ENCODE measurements at regions of chr6 and their contacts with region 1.

Region 1: GRCh38 chr6:106444777-106445507 is 84.4 kb downstream of the CRYBG1 start:
- DNase-seq: no peak
- H3K4me3 ChIP-seq: no peak overlapping the region
- H3K27ac ChIP-seq: no peak overlapping the region
- H3K4me1 ChIP-seq: peaks cover 0 to 3% (median 0%) of the 10 kb centered on the region in 4 experiments; a peak in 1 of 7 replicates
- H3K27me3 ChIP-seq: no peaks in the 10 kb centered on the region
- CTCF ChIP-seq: peak in 2 of 3 experiments; percentile 57 to 80; a peak in 2 of 4 replicates
- EP300 ChIP-seq: no peak
- POLR2A ChIP-seq: no peak
- RAD21 ChIP-seq: peak; percentile 79

Region 2: DNA sequence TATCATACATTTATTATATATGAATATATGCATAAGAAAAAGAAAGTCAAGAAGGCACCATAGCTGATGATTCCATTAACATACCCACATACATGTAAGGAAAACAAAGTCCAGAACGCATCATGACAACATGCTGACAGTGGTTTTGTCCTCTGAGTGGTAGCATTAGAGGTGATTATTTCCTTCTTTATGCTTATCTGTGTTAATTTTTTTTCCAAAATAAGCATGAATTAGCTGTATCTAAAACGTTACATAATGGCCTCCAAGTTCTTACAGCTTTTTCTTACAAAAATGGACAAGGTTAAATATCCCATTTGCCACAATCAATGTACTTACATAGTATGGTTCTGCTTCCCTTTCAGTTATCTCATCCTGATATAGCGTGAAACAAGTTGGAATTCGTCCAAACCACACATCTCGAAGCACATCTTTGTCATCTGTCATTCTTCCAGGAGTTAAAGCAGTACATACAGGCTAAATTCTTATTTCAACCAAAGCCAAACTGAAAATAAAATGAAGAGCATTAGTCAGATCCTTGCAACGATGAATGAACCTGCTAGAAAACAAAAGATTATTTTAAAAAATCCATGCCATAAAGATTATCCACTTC is 129.1 kb before region 1 on chr6:
- CTCF ChIA-PET with region 1: no interaction called
- POLR2A ChIA-PET with region 1: no interaction called
- DNase-seq: no peak
- H3K4me3 ChIP-seq: no peak overlapping the region
- H3K27ac ChIP-seq: no peak overlapping the region
- H3K4me1 ChIP-seq: no peaks in the 10 kb centered on the region
- H3K27me3 ChIP-seq: no peaks in the 10 kb centered on the region
- CTCF ChIP-seq: no peak
- EP300 ChIP-seq: no peak
- POLR2A ChIP-seq: no peak
- RAD21 ChIP-seq: no peak

Region 3: GRCh38 chr6:106461084-106461483 is 16.1 kb after region 1 on chr6:
- CTCF ChIA-PET with region 1: interaction called, 21 read pairs
- POLR2A ChIA-PET with region 1: no interaction called
- DNase-seq: no peak
- H3K4me3 ChIP-seq: no peak overlapping the region
- H3K27ac ChIP-seq: no peak overlapping the region
- H3K4me1 ChIP-seq: peaks cover 0 to 9% (median 3%) of the 10 kb centered on the region in 4 experiments; a peak in 4 of 7 replicates
- H3K27me3 ChIP-seq: peaks cover 0 to 2% (median 0%) of the 10 kb centered on the region in 4 experiments; a peak in 3 of 7 replicates
- CTCF ChIP-seq: no peak
- EP300 ChIP-seq: no peak
- POLR2A ChIP-seq: no peak
- RAD21 ChIP-seq: no peak

Region 4: DNA sequence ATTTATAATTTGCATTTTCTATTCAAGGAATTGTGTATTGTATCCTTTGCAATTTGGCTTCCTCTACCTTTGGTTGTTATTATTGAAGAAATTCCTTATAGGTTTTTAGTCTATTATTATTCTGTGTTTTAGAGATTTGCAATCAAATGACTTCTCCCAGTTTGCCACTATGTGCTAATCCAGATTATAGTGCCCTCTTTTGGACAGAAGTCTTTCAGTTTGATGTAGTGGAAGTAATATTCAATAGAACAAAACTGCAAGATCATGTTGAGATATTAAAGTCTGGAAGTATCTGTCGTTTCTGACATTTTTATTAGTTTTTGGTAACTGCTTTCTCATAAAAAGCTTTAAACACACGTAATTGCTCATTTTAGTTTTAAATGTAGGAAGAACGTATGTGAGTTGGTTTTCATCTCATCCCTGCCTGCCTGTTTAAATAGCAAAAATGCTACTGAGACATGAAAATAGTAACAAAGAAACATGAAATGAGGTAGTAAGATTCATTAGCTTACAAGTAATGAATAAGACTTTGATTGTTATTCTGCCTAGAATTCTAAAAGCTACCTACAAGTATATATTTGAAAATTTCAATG is 111.5 kb after region 1 on chr6:
- CTCF ChIA-PET with region 1: interaction called, 11 read pairs
- POLR2A ChIA-PET with region 1: no interaction called
- DNase-seq: no peak
- H3K4me3 ChIP-seq: no peak overlapping the region
- H3K27ac ChIP-seq: no peak overlapping the region
- H3K4me1 ChIP-seq: no peaks in the 10 kb centered on the region
- H3K27me3 ChIP-seq: no peaks in the 10 kb centered on the region
- CTCF ChIP-seq: peak in 1 of 3 experiments; percentile 7; a peak in 2 of 4 replicates
- EP300 ChIP-seq: no peak
- POLR2A ChIP-seq: no peak
- RAD21 ChIP-seq: peak in 1 of 2 experiments; percentile 10; a peak in 1 of 4 replicates

Region 5: DNA sequence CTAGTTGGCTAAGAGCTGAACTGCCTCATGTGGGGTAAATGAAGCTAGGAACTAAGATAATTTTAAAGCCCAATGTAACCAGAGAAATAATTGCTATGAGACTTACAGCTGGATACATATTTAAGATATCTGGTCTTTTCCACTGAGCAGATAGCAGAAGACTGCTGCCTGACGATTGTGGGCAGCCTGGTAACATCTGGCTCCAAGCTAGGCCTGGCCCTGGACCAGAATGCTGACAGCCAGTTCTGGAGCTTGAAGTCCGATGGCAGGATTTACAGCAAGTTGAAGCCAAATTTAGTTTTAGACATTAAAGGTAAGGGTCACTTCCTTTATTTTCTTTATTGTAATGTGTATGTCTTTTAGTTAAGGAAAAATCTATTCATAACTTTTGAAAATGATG is 118.7 kb after region 1 on chr6:
- CTCF ChIA-PET with region 1: interaction called, 46 read pairs
- POLR2A ChIA-PET with region 1: interaction called, 3 read pairs
- DNase-seq: no peak
- H3K4me3 ChIP-seq: no peak overlapping the region
- H3K27ac ChIP-seq: no peak overlapping the region
- H3K4me1 ChIP-seq: peaks cover 0 to 10% (median 5%) of the 10 kb centered on the region in 4 experiments; a peak in 3 of 7 replicates
- H3K27me3 ChIP-seq: no peaks in the 10 kb centered on the region
- CTCF ChIP-seq: no peak
- EP300 ChIP-seq: no peak
- POLR2A ChIP-seq: no peak
- RAD21 ChIP-seq: no peak

Region 6: GRCh38 chr6:106715922-106716321 is 271.0 kb after region 1 on chr6:
- CTCF ChIA-PET with region 1: no interaction called
- POLR2A ChIA-PET with region 1: no interaction called
- DNase-seq: no peak
- H3K4me3 ChIP-seq: no peak overlapping the region
- H3K27ac ChIP-seq: no peak overlapping the region
- H3K4me1 ChIP-seq: peaks cover 0 to 5% (median 2%) of the 10 kb centered on the region in 4 experiments; a peak in 3 of 7 replicates
- H3K27me3 ChIP-seq: no peaks in the 10 kb centered on the region
- CTCF ChIP-seq: no peak
- EP300 ChIP-seq: no peak
- POLR2A ChIP-seq: no peak
- RAD21 ChIP-seq: no peak